GM12878 (cell line): ENCODE measurements at regions of chr13 and their contacts with region 1.

Region 1: GRCh38 chr13:97212601-97213040 is 9.5 kb upstream of the MBNL2 start:
- DNase-seq: no peak
- ATAC-seq: peak; percentile 84
- H3K4me3 ChIP-seq: no peak overlapping the region
- H3K27ac ChIP-seq: no peak overlapping the region
- H3K4me1 ChIP-seq: peaks cover 7% of the 10 kb centered on the region
- H3K27me3 ChIP-seq: no peaks in the 10 kb centered on the region
- CTCF ChIP-seq: peak; percentile 43 to 60 (median 53)
- EP300 ChIP-seq: no peak
- POLR2A ChIP-seq: no peak
- RAD21 ChIP-seq: peak; percentile 59

Region 2: DNA sequence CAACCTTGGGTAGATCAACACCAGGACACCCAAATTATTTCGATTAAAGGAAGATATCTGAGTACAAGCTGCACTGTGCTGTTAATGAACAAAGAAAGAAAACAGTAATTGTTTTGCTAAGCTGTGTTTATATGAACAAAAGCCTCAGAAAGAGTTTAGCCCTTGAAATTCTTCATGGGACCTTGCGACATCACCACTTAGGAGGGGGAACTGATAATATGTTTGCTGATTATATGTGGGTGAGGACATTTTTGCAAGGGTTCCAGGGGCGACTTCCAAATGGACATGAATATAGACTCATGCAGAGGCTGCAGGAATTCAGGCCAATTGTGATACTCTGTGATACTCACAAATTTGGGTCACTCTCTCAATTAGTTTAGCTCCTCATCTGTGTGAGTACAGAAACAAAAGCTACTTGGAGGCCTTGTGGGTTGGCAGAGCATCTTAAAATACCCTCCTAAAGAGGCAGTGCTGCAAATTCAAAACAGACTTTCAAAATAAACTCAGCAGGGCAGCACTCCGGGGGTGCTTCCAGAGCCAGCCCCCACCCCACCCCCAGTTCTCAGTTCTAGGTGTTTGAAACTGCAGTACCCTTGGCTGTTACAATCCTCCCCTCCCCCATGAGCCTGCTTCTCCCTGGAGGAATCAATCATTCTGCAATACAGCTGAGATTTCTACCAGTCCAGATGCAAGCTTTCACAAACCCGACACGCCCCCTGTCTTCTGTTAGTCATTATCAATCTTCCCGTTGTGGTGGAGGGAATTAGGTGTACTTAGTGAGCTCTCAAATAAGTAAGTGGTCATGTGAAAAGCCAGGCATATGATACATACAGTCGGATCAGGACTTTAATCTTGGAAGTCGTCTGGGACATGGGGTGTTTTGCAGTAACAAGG is 87.5 kb before region 1 on chr13:
- CTCF ChIA-PET with region 1: interaction called, 4 read pairs
- POLR2A ChIA-PET with region 1: no interaction called
- RAD21 ChIA-PET with region 1: no interaction called
- SMC1A ChIA-PET with region 1: no interaction called
- in situ Hi-C with region 1: no loop called
- intact Hi-C with region 1: loop called (anchors 5 kb)
- DNase-seq: peak; percentile 63
- ATAC-seq: peak; percentile 59
- H3K4me3 ChIP-seq: peak overlapping the region; percentile 41; the same call in 1 of the 2 replicates
- H3K27ac ChIP-seq: no peak overlapping the region
- H3K4me1 ChIP-seq: peaks cover 24% of the 10 kb centered on the region
- H3K27me3 ChIP-seq: no peaks in the 10 kb centered on the region
- CTCF ChIP-seq: peak in 1 of 3 experiments; percentile 13; a peak in 1 of 6 replicates
- EP300 ChIP-seq: no peak
- POLR2A ChIP-seq: no peak
- RAD21 ChIP-seq: no peak

Region 3: GRCh38 chr13:97242755-97243497 is 30.3 kb after region 1 on chr13:
- CTCF ChIA-PET with region 1: no interaction called
- POLR2A ChIA-PET with region 1: no interaction called
- RAD21 ChIA-PET with region 1: no interaction called
- SMC1A ChIA-PET with region 1: no interaction called
- in situ Hi-C with region 1: no loop called
- intact Hi-C with region 1: no loop called
- DNase-seq: no peak
- ATAC-seq: no peak
- H3K4me3 ChIP-seq: no peak overlapping the region
- H3K27ac ChIP-seq: no peak overlapping the region
- H3K4me1 ChIP-seq: no peaks in the 10 kb centered on the region; the same call in 1 of the 2 replicates
- H3K27me3 ChIP-seq: no peaks in the 10 kb centered on the region
- CTCF ChIP-seq: no peak
- EP300 ChIP-seq: no peak
- POLR2A ChIP-seq: no peak
- RAD21 ChIP-seq: no peak

Region 4: GRCh38 chr13:97319113-97319720 is 106.6 kb after region 1 on chr13:
- CTCF ChIA-PET with region 1: no interaction called
- POLR2A ChIA-PET with region 1: no interaction called
- RAD21 ChIA-PET with region 1: no interaction called
- SMC1A ChIA-PET with region 1: no interaction called
- in situ Hi-C with region 1: no loop called
- intact Hi-C with region 1: no loop called
- DNase-seq: no peak
- ATAC-seq: no peak
- H3K4me3 ChIP-seq: no peak overlapping the region
- H3K27ac ChIP-seq: no peak overlapping the region
- H3K4me1 ChIP-seq: no peaks in the 10 kb centered on the region
- H3K27me3 ChIP-seq: no peaks in the 10 kb centered on the region
- CTCF ChIP-seq: no peak
- EP300 ChIP-seq: no peak
- POLR2A ChIP-seq: no peak
- RAD21 ChIP-seq: no peak